Colonic mucosa (tissue), 4 donors: ENCODE measurements at regions of chr7 and their contacts with region 1.

Region 1: DNA sequence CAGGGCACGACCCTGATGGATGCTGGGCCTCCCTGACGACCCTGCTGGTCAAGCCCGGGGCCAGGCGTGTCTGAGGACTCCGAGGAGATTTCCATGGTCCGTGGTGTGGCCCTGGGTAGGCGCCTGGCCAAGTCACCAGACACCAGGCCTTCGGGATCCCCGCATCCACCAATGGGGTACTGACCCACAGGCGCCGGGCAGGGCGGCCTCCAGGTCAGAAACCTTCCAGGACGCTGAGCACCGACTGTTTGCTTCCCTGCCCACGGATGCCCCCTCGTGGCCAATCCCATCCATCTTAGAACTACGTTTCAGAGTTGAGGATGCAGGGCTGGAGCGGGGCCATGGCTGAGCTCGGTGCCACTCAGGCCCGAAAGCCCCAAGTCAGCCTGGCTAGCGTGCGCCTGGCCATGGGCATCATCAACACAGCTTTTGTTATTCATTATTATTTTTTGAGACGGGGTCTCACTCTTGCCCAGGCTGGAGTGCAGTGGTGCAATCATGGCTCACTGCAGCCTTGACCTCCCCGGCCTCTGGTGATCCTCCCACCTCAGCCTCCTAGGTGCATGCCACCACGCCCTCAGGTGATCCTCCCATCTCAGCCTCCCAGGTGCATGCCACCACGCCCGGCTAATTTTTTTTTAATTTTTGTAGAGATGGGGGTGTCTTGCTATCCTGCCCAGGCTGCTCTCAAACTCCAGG is 7.1 kb upstream of the AMZ1 start:
- DNase-seq: peak; percentile 88
- H3K4me3 ChIP-seq: no peak overlapping the region
- H3K27ac ChIP-seq: no peak overlapping the region
- H3K4me1 ChIP-seq: no peaks in the 10 kb centered on the region
- H3K27me3 ChIP-seq: peaks cover 5% of the 10 kb centered on the region
- CTCF ChIP-seq: peak; percentile 59

Region 2: DNA sequence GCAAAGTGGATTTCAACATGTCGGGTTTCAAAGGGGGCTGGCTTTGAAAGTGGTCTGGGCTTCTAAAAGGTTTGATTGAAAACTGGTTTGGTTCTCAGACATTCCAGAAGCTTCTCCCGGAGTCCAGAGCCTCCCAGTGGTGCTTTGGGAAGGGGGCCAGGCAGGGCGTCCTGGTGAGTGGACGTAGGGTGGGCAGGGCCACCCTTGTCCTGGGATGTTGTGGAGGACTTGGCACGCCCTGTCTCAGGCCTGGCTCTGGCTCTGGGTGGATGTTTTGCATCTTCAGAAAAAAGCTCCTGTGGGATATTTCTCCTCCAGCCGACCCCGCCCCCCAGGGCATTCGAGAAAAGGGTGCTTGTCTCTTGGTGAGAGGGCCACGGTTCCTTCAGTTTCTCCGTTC is 235.9 kb before region 1 on chr7:
- intact Hi-C with region 1: loop called (anchors 5 kb)
- DNase-seq: no peak
- H3K4me3 ChIP-seq: no peak overlapping the region
- H3K27ac ChIP-seq: no peak overlapping the region
- H3K4me1 ChIP-seq: no peaks in the 10 kb centered on the region
- H3K27me3 ChIP-seq: no peaks in the 10 kb centered on the region
- CTCF ChIP-seq: no peak